Transverse colon (tissue), 4 donors: ENCODE measurements at regions of chr2 and their contacts with region 1.

Region 1: GRCh38 chr2:43537137-43537536 is 58.7 kb downstream of the THADA start:
- DNase-seq: no peak
- H3K4me3 ChIP-seq: no peak overlapping the region
- H3K27ac ChIP-seq: peak overlapping the region; percentile 1 to 72 (median 48)
- H3K4me1 ChIP-seq: peaks cover 0 to 27% (median 12%) of the 10 kb centered on the region in 4 donors
- H3K27me3 ChIP-seq: no peaks in the 10 kb centered on the region
- CTCF ChIP-seq: no peak
- EP300 ChIP-seq: no peak
- POLR2A ChIP-seq: peak; percentile 39

Region 2: DNA sequence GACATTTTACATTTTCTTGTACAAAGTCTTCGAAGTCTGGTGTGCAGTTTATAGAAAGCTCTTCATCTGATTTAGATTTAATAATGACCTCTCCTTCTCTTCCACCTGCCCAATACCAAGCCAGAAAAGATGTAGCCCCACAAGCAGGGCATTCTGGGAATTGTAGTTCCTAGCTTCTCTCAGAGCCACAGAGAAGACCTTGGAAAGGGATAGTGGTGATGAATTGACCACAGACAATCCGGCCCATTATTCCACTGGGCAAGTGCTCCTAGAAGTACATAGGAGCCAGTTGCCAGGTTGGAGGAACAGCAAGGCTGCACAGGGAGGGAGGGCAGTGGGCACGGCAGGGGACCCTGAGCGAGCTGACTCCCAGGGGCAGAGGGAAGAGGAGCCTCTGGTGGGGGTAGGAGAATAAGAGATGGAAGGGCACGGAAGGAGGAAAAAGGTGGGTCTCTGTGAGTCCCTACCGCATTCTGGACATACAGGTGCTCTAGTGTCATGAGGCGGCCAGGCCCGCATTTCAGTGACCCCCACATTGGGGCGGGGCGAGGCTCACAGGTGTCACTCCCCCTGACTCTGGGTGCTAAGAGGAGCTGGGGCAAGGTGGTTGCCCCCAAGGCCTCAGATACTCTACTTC is 592.2 kb before region 1 on chr2:
- in situ Hi-C with region 1: no loop called
- intact Hi-C with region 1: loop called (anchors 5 kb)
- DNase-seq: no peak
- H3K4me3 ChIP-seq: no peak overlapping the region
- H3K27ac ChIP-seq: no peak overlapping the region
- H3K4me1 ChIP-seq: peaks cover 0 to 10% (median 9%) of the 10 kb centered on the region in 4 donors
- H3K27me3 ChIP-seq: no peaks in the 10 kb centered on the region
- CTCF ChIP-seq: no peak
- EP300 ChIP-seq: no peak
- POLR2A ChIP-seq: no peak

Region 3: GRCh38 chr2:43387092-43388062 is 149.8 kb before region 1 on chr2:
- in situ Hi-C with region 1: no loop called
- intact Hi-C with region 1: no loop called
- DNase-seq: peak; percentile 15
- H3K4me3 ChIP-seq: no peak overlapping the region
- H3K27ac ChIP-seq: peak overlapping the region; percentile 17 to 34 (median 26)
- H3K4me1 ChIP-seq: peaks cover 14 to 47% (median 24%) of the 10 kb centered on the region in 4 donors
- H3K27me3 ChIP-seq: no peaks in the 10 kb centered on the region
- CTCF ChIP-seq: no peak
- EP300 ChIP-seq: no peak
- POLR2A ChIP-seq: no peak

Region 4: GRCh38 chr2:43831543-43832294 is 294.6 kb after region 1 on chr2:
- in situ Hi-C with region 1: no loop called
- intact Hi-C with region 1: no loop called
- DNase-seq: no peak
- H3K4me3 ChIP-seq: peak overlapping the region in 3 of 4 donors; percentile 19 to 31 (median 25)
- H3K27ac ChIP-seq: no peak overlapping the region
- H3K4me1 ChIP-seq: no peaks in the 10 kb centered on the region
- H3K27me3 ChIP-seq: peaks cover 31% of the 10 kb centered on the region
- CTCF ChIP-seq: no peak
- EP300 ChIP-seq: no peak
- POLR2A ChIP-seq: no peak